ENCODE measurements at regions of chr2 and their contacts with region 1.

Region 1: DNA sequence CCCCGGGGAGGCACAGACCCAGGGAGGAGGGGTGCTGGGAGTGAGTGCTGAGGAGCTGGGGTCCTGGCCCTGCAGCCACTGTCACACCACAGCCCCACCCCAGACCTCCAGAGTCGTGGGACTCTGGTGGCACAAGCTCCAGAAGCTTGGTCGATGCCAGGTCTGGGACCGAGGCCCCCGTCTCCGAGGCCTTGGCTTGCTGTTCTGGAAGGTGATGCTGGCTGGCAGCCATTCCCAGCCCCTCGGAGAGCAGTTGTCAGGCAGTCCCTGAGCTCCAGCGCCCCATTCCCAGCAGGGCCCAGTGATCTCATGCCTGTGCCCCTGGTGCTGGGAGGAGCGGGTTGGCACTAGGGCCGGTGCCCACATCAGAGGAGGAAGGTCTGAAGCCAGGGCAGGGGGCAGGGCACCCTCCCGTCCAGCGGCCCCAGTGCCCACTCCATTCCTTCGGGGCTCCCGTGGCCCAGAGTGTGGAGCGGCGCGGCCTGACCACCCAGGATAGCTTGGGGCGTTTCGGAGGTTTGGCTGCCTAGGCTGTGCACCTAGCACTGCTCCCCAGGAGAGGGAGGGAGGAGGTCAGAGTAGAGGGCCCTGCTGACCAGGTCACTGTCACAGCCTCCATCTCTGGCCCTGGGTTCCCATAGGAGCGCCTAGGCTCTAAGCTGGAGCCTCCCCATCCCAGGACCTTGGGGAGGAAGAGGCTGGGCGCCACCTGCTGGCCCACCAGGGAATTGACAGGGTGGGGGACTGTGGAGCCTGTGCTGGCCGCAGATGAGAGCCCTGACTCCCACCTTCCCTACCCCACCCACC is 16.8 kb upstream of the ALPI start:
- DNase-seq: peak in 29 of 42 donors; percentile 16 to 75 (median 50)

Region 2: GRCh38 chr2:232333361-232334270 is 105.5 kb before region 1 on chr2:
- intact Hi-C with region 1: loop called (anchors 10 kb)
- DNase-seq: peak in 14 of 42 donors; percentile 1 to 44 (median 10)

Region 3: DNA sequence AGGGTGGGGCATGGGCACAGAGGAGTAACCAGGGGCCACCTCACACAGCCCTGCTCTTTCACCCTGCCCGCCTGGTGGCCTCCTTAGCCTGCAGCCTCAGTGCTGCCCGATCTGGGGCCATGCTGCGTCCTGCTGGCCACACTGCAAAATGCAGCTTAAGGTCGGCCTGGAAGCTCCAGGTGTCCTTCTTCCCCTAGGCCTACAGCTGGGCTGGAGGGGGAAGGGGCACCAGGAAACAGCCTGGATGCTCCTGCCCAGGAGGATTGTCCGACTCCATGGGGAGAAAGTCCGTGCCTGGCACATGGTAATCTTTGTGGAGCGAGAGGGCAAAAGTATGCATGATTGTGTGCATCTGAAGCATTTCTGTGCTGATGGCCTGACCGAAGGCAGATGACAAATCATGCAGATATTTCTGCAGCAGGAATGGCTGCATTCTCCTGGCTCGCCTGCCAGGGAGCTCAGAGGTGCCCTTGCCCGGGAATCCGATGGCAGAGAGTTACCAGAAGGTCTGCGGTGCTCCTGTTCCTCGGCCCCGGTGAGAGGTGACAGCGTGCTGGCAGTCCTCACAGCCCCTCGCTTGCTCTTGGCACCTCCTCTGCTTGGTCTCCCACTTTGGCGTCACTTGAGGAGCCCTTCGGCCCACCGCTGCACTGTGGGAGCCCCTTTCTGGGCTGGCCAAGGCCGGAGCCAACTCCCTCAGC is 73.4 kb before region 1 on chr2:
- intact Hi-C with region 1: no loop called
- DNase-seq: peak in 1 of 42 donors; percentile 5

Region 4: GRCh38 chr2:232901736-232902578 is 462.8 kb after region 1 on chr2:
- intact Hi-C with region 1: no loop called
- DNase-seq: peak in 33 of 42 donors; percentile 39 to 91 (median 68)